Left ventricle myocardium superior (tissue), 1 donor: ENCODE measurements at regions of chr2 and their contacts with region 1.

Region 1: GRCh38 chr2:159539701-159540100 is 76.6 kb downstream of the BAZ2B start:
- DNase-seq: no peak
- ATAC-seq: no peak

Region 2: GRCh38 chr2:159209341-159210306 is 330.1 kb before region 1 on chr2:
- intact Hi-C with region 1: no loop called
- DNase-seq: no peak
- ATAC-seq: no peak

Region 3: DNA sequence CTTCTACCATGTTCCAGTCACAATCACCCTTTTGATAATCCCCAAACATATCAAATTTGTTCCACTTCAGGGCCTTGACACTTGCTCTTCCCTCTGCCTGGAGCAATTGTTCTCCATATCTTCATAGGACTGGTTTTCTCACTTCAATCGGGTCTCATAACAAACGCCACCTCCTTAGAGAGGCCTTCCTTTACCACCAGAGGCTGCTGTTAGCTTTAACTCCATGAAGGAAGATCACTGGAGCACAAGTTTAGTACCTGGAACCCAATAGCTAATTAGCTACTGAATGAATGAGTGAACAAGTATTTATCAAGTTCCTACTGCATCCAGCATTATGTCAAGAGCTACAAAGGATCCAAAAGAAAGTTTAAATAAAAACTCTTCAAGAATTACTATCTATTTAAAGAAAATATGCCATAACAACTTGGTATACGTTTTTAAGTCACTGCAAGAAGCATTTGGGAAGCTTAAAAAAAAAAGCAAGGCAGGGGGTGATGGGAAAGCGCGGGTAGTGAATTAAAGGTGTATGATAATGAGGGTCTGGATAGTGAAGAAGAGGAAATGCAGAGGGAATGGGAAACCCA is 17.8 kb after region 1 on chr2:
- intact Hi-C with region 1: no loop called
- DNase-seq: no peak
- ATAC-seq: peak; percentile 68

Region 4: GRCh38 chr2:159600752-159601151 is 61.1 kb after region 1 on chr2:
- intact Hi-C with region 1: loop called (anchors 2 kb)
- DNase-seq: no peak
- ATAC-seq: no peak